Prostate gland (tissue), 2 donors: ENCODE measurements at regions of chr16 and their contacts with region 1.

Region 1: GRCh38 chr16:21565861-21566669 is 33.3 kb upstream of the METTL9 start:
- DNase-seq: no peak
- H3K4me3 ChIP-seq: no peak overlapping the region
- H3K27ac ChIP-seq: no peak overlapping the region
- H3K4me1 ChIP-seq: peaks cover 5% of the 10 kb centered on the region
- H3K27me3 ChIP-seq: no peaks in the 10 kb centered on the region
- CTCF ChIP-seq: no peak
- POLR2A ChIP-seq: no peak

Region 2: DNA sequence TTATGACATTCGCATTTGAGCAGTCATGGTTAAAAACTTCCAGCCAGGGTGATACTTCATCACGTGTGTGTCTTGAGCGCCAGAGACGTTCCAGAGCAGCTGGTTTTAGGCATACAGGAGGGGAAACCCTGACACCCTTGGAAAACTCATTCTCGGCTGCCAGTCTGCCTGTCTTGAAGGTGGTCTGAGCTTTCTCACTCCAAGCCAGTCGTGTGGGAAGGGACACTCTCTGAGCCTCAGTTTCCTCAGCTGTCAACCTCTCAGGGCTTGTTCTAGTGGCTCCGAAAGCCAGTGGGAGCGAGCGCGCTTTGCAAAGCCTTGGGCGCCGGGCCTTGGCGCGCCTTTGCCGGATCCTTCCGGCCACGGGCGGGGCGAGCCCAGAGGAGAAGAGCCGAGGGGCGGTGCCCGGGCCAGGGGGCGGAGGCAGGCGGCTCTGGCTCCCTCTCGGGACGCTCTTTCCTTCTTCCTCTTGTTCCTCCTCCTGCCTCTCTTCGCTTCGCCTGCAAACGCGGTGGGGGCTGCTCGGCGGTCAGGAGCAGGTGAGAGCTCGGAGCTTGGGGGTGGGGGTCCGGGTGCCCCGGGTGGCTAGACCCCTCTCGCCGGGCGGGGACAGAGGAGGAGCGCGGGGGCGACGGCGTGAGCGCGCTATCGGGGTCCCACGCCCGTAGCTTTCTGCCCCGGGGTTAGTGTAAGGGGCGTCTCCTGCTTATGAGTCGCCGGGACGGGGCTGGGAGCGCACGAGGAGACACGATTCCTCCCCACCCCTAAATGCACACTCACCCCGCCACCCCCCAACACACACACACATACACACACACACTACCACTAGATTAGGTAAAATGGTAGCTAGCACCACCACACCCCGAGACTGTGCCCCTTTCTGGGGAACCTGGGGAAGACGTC is 407.6 kb before region 1 on chr16 and contains the start of gene LDAF1:
- intact Hi-C with region 1: loop called (anchors 10 kb)
- DNase-seq: peak; percentile 87
- H3K4me3 ChIP-seq: peak within 1 kb of the TSS; percentile 64
- H3K27ac ChIP-seq: peak within 1 kb of the TSS; percentile 84 to 88
- H3K4me1 ChIP-seq: peaks cover 5% of the 10 kb centered on the region
- H3K27me3 ChIP-seq: no peaks in the 10 kb centered on the region
- CTCF ChIP-seq: peak in 2 of 4 experiments; percentile 26
- POLR2A ChIP-seq: peak; percentile 89
- total RNA-seq, gene LDAF1: 97.5 to 180 TPM

Region 3: GRCh38 chr16:21194771-21195301 is 371.2 kb before region 1 on chr16:
- intact Hi-C with region 1: no loop called
- DNase-seq: no peak
- H3K4me3 ChIP-seq: no peak overlapping the region
- H3K27ac ChIP-seq: no peak overlapping the region
- H3K4me1 ChIP-seq: no peaks in the 10 kb centered on the region
- H3K27me3 ChIP-seq: no peaks in the 10 kb centered on the region
- CTCF ChIP-seq: no peak
- POLR2A ChIP-seq: no peak

Region 4: DNA sequence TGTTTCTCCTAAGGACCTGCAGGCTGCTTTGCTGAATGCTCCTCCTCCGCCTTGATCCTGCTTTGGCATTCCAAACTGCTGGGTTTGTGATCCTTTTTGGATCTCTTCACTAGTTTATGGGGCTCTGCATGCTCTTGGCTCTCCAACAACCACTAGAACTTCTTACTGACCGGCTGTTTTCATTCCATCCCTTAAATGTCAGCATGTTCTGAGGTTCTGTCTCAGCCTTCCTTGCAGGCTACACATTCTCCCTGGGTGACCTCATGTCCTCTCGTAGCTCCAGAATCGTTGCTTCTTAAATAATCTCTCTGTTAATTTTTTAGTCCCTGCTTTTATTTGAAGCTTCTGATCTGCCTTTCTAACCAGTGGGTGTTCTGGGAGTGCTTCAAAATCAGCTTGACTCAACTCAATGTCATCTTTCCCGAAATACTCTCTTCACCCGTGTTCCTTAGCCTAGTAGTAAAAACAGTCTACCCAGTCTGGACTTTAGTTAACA is 1128.9 kb after region 1 on chr16:
- intact Hi-C with region 1: loop called (anchors 5 kb)
- DNase-seq: no peak
- H3K4me3 ChIP-seq: no peak overlapping the region
- H3K27ac ChIP-seq: peak overlapping the region; percentile 47 to 56
- H3K4me1 ChIP-seq: no peaks in the 10 kb centered on the region
- H3K27me3 ChIP-seq: no peaks in the 10 kb centered on the region
- CTCF ChIP-seq: no peak
- POLR2A ChIP-seq: no peak